Aorta (tissue), 5 donors: ENCODE measurements at regions of chr12 and their contacts with region 1.

Region 1: GRCh38 chr12:15220994-15221885 is at the start of gene RERG:
- DNase-seq: peak; percentile 89 to 95
- ATAC-seq: peak; percentile 98
- H3K4me3 ChIP-seq: peak within 1 kb of the TSS; percentile 51 to 57
- H3K27ac ChIP-seq: peak within 1 kb of the TSS; percentile 59 to 87
- H3K4me1 ChIP-seq: peaks cover 0 to 6% of the 10 kb centered on the region in 2 donors
- H3K27me3 ChIP-seq: no peaks in the 10 kb centered on the region
- total RNA-seq, gene RERG: 70.5 to 77.3 TPM

Region 2: GRCh38 chr12:14723763-14724162 is 497.5 kb before region 1 on chr12:
- intact Hi-C with region 1: loop called in 1 of 2 experiments (anchors 10 kb)
- DNase-seq: no peak
- ATAC-seq: peak; percentile 83
- H3K4me3 ChIP-seq: no peak overlapping the region
- H3K27ac ChIP-seq: no peak overlapping the region
- H3K4me1 ChIP-seq: no peaks in the 10 kb centered on the region
- H3K27me3 ChIP-seq: no peaks in the 10 kb centered on the region

Region 3: DNA sequence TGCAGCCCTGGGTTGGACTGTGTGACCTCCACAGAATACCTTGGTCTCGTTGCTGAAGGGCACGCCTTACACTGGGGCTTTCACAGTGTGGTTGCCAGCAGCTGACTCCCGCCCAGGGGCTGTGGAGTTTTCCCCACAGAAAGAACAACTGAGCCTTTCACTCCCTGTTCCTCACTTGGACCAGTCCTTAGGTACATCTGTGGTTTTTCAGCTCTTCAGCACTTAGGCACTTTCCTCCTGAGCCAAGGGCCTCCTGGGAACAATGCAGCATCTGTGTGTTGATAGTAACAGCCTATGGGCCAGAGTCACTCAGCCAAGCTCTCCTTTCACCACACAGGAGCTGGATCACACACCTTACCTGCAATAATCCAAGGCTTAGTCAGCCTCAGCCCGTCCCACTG is 307.9 kb before region 1 on chr12:
- intact Hi-C with region 1: no loop called
- DNase-seq: no peak
- ATAC-seq: peak; percentile 56
- H3K4me3 ChIP-seq: no peak overlapping the region
- H3K27ac ChIP-seq: no peak overlapping the region
- H3K4me1 ChIP-seq: no peaks in the 10 kb centered on the region
- H3K27me3 ChIP-seq: no peaks in the 10 kb centered on the region

Region 4: GRCh38 chr12:15001733-15002382 is 219.4 kb before region 1 on chr12:
- intact Hi-C with region 1: loop called (anchors 5 kb)
- DNase-seq: peak; percentile 79 to 80
- ATAC-seq: peak; percentile 87
- H3K4me3 ChIP-seq: peak overlapping the region in 1 of 2 donors; percentile 6
- H3K27ac ChIP-seq: peak overlapping the region in 1 of 2 donors; percentile 33
- H3K4me1 ChIP-seq: peaks cover 2% of the 10 kb centered on the region in 2 donors
- H3K27me3 ChIP-seq: no peaks in the 10 kb centered on the region

Region 5: DNA sequence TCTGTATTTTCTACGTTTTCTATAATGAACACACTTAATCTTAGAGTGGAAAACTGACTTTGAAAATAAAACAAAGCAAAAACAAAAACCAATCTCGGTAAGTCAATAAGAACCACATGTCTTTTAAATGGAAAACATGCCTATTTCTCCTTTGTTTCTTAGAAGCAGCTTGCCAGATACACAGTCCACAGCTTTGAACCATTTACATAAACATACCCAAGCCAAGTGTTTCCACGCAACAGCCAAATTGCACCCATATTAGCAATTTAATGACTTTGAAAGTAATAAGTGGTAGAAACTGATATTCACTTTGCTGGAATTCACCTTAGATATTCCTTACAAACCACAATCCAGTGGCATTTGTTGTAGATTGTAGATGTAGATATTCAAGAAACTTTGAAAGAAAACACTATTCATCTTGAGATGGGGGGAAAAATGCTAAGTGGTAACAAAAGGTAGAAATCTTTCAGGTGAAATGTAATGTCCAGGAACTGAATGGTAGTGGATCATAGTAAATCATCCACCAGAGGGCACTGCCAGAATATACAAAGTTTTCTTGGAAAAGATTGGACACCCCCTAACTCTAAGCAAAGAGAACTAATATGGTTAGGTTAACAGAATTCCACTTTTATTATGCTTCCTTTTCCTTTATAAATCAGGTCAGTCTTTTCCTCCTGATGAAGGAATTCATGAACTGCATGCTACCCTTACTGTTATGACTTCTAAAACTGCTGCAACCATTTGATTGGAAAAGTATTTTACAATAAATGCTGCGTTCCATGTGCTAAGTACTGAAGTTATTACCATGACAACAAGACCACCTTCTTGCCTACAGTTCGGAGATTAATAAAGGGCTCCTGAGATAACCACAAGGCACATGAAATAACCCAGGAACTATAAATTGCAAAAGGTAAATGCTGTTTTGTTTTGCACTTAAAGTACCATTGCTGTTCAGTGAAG is 69.8 kb before region 1 on chr12:
- intact Hi-C with region 1: loop called (anchors 1 to 2 kb)
- DNase-seq: no peak
- ATAC-seq: peak; percentile 83
- H3K4me3 ChIP-seq: no peak overlapping the region
- H3K27ac ChIP-seq: peak overlapping the region in 1 of 2 donors; percentile 96
- H3K4me1 ChIP-seq: peaks cover 7 to 9% of the 10 kb centered on the region in 2 donors
- H3K27me3 ChIP-seq: no peaks in the 10 kb centered on the region